ENCODE measurements at regions of chr6 and their contacts with region 1.

Region 1: GRCh38 chr6:135128268-135128914 is 52.7 kb upstream of the MYB start:
- DNase-seq: peak; percentile 85
- ATAC-seq: peak; percentile 96
- H3K4me3 Mint-ChIP-seq: peak overlapping the region; percentile 65
- H3K27ac Mint-ChIP-seq: peak overlapping the region; percentile 99
- H3K4me1 Mint-ChIP-seq: peaks cover 51% of the 10 kb centered on the region
- H3K27me3 Mint-ChIP-seq: no peaks in the 10 kb centered on the region

Region 2: GRCh38 chr6:135088818-135089809 is 39.3 kb before region 1 on chr6:
- CTCF ChIA-PET with region 1: interaction called, 13 read pairs
- DNase-seq: peak; percentile 79
- ATAC-seq: peak; percentile 87
- H3K4me3 Mint-ChIP-seq: peak overlapping the region; percentile 71
- H3K27ac Mint-ChIP-seq: peak overlapping the region; percentile 89
- H3K4me1 Mint-ChIP-seq: peaks cover 84% of the 10 kb centered on the region
- H3K27me3 Mint-ChIP-seq: no peaks in the 10 kb centered on the region

Region 3: GRCh38 chr6:135114355-135115145 is 13.8 kb before region 1 on chr6:
- CTCF ChIA-PET with region 1: interaction called, 13 read pairs
- DNase-seq: peak; percentile 86
- ATAC-seq: peak; percentile 84
- H3K4me3 Mint-ChIP-seq: peak overlapping the region; percentile 47
- H3K27ac Mint-ChIP-seq: peak overlapping the region; percentile 94
- H3K4me1 Mint-ChIP-seq: peaks cover 83% of the 10 kb centered on the region
- H3K27me3 Mint-ChIP-seq: no peaks in the 10 kb centered on the region